Activated B cell treated with CpG ODN at 0.5 μM for 24 hours (primary cell): ENCODE measurements at regions of chr18 and their contacts with region 1.

Region 1: GRCh38 chr18:44679056-44679905 is 1.4 kb upstream of the SETBP1 start:
- DNase-seq: peak; percentile 83
- ATAC-seq: peak; percentile 81
- H3K4me3 Mint-ChIP-seq: peak overlapping the region; percentile 75
- H3K27ac Mint-ChIP-seq: peak overlapping the region; percentile 63
- H3K4me1 Mint-ChIP-seq: peaks cover 9% of the 10 kb centered on the region
- H3K27me3 Mint-ChIP-seq: no peaks in the 10 kb centered on the region
- CTCF ChIP-seq: no peak

Region 2: DNA sequence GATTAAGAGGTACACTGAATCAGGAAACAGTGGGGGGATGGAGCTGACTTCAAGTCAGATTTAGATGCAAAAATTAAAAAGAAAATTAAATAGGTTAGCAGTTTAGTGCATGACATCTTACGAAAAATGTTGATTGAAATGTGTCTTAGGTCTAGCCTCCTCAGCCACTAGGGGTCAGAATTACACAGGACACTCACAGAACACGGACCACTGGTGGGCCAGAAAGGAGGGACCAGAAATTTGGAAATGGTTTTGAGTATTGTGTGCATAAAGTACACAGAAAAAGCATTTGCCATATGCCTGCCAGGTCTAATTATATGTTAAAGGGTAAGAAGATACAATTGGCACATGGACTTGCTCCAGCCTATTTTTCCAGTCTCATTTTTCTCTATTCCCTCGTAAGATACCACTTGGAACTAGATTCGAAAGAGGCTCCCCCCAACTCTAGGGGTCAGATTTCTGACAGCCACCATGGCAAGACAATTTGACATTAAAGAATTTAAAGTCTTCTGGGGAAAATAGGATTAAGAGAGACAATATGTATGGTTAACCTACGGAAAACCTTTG is 548.8 kb before region 1 on chr18:
- CTCF ChIA-PET with region 1: no interaction called
- POLR2A ChIA-PET with region 1: no interaction called
- intact Hi-C with region 1: loop called (anchors 2 kb)
- DNase-seq: no peak
- ATAC-seq: no peak
- H3K4me3 Mint-ChIP-seq: no peak overlapping the region
- H3K27ac Mint-ChIP-seq: no peak overlapping the region
- H3K4me1 Mint-ChIP-seq: peaks cover 8% of the 10 kb centered on the region
- H3K27me3 Mint-ChIP-seq: peaks cover 7% of the 10 kb centered on the region
- CTCF ChIP-seq: peak; percentile 24

Region 3: GRCh38 chr18:44758861-44759631 is 79.8 kb after region 1 on chr18:
- CTCF ChIA-PET with region 1: interaction called, 12 read pairs
- POLR2A ChIA-PET with region 1: interaction called, 92 read pairs
- intact Hi-C with region 1: loop called (anchors 1 kb)
- DNase-seq: peak; percentile 41
- ATAC-seq: peak; percentile 87
- H3K4me3 Mint-ChIP-seq: peak overlapping the region; percentile 76
- H3K27ac Mint-ChIP-seq: peak overlapping the region; percentile 94
- H3K4me1 Mint-ChIP-seq: peaks cover 93% of the 10 kb centered on the region
- H3K27me3 Mint-ChIP-seq: no peaks in the 10 kb centered on the region
- CTCF ChIP-seq: no peak

Region 4: GRCh38 chr18:44838971-44839666 is 159.8 kb after region 1 on chr18:
- CTCF ChIA-PET with region 1: interaction called, 6 read pairs
- POLR2A ChIA-PET with region 1: interaction called, 35 read pairs
- intact Hi-C with region 1: loop called (anchors 1 kb)
- DNase-seq: peak; percentile 58
- ATAC-seq: peak; percentile 83
- H3K4me3 Mint-ChIP-seq: peak overlapping the region; percentile 61
- H3K27ac Mint-ChIP-seq: peak overlapping the region; percentile 81
- H3K4me1 Mint-ChIP-seq: peaks cover 81% of the 10 kb centered on the region
- H3K27me3 Mint-ChIP-seq: no peaks in the 10 kb centered on the region
- CTCF ChIP-seq: no peak

Region 5: GRCh38 chr18:44973282-44973681 is 294.0 kb after region 1 on chr18:
- CTCF ChIA-PET with region 1: no interaction called
- POLR2A ChIA-PET with region 1: interaction called, 4 read pairs
- intact Hi-C with region 1: loop called (anchors 1 kb)
- DNase-seq: no peak
- ATAC-seq: no peak
- H3K4me3 Mint-ChIP-seq: no peak overlapping the region
- H3K27ac Mint-ChIP-seq: no peak overlapping the region
- H3K4me1 Mint-ChIP-seq: peaks cover 22% of the 10 kb centered on the region
- H3K27me3 Mint-ChIP-seq: no peaks in the 10 kb centered on the region
- CTCF ChIP-seq: no peak

Region 6: GRCh38 chr18:45060102-45060501 is 380.8 kb after region 1 on chr18:
- CTCF ChIA-PET with region 1: no interaction called
- POLR2A ChIA-PET with region 1: no interaction called
- intact Hi-C with region 1: no loop called
- DNase-seq: no peak
- ATAC-seq: no peak
- H3K4me3 Mint-ChIP-seq: no peak overlapping the region
- H3K27ac Mint-ChIP-seq: no peak overlapping the region
- H3K4me1 Mint-ChIP-seq: peaks cover 5% of the 10 kb centered on the region
- H3K27me3 Mint-ChIP-seq: no peaks in the 10 kb centered on the region
- CTCF ChIP-seq: no peak

Region 7: DNA sequence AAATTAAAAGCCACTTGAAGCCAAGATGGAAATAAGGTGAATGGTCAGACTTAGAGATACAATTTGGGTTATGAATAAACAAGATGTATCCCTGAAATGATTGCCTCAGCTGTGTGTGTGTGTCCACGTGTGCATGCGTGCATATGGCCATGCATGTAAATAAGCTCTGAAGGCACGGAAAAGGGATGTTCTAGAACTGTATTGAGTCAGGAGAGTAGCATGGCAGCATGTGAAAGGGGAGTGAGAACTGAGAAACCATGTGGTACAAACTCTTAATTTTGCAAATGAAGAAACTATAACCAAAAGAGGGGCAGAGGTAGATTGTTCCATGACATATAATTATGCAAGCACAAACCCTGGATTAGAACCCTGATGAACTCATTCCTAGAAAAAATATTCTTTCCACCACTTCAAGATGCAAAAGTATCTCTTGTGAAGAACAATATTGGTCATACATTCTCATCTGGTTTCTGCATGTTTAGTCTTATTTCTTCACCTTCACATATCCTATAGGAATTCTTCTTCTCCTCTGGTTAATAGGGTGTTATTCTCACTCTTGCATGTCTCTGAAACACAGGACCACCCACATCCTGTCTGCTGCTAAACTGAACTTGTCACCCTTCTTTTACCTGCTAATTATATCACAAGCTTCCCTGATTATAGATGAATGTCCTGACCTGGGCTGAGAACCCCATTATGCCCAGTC is 457.3 kb after region 1 on chr18:
- CTCF ChIA-PET with region 1: interaction called, 4 read pairs
- POLR2A ChIA-PET with region 1: interaction called, 11 read pairs
- intact Hi-C with region 1: no loop called
- DNase-seq: no peak
- ATAC-seq: no peak
- H3K4me3 Mint-ChIP-seq: peak overlapping the region; percentile 36
- H3K27ac Mint-ChIP-seq: peak overlapping the region; percentile 72
- H3K4me1 Mint-ChIP-seq: peaks cover 41% of the 10 kb centered on the region
- H3K27me3 Mint-ChIP-seq: no peaks in the 10 kb centered on the region
- CTCF ChIP-seq: no peak